PC-9 (cell line): ENCODE measurements at regions of chr10 and their contacts with region 1.

Region 1: GRCh38 chr10:14529351-14529750 is 198.6 kb upstream of the FRMD4A start:
- DNase-seq: no peak
- H3K4me3 ChIP-seq: no peak overlapping the region
- H3K27ac ChIP-seq: no peak overlapping the region
- H3K4me1 ChIP-seq: peaks cover 8% of the 10 kb centered on the region; the same call in 1 of the 2 replicates
- H3K27me3 ChIP-seq: no peaks in the 10 kb centered on the region
- CTCF ChIP-seq: no peak

Region 2: DNA sequence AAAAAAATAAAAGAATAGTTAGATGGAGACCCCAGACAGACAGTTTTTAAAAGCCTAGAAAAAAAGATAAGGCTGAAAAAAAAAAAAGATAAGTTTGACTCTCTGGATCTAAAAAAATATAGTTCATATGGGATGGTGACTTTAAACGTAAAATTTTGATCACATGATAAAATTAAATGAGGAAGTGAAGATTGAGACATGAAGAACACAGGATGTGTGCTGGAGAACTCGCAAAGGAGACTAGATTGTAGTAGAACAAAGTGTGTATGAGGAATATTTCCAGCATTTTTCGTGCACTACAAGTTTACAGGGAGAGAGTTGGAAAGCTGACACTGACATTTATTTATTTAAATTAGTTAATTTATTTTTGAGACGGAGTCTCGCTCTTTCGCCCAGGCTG is 656.2 kb before region 1 on chr10:
- CTCF ChIA-PET with region 1: no interaction called
- POLR2A ChIA-PET with region 1: no interaction called
- intact Hi-C with region 1: no loop called
- DNase-seq: no peak
- H3K4me3 ChIP-seq: no peak overlapping the region
- H3K27ac ChIP-seq: no peak overlapping the region
- H3K4me1 ChIP-seq: no peaks in the 10 kb centered on the region
- H3K27me3 ChIP-seq: no peaks in the 10 kb centered on the region
- CTCF ChIP-seq: no peak

Region 3: DNA sequence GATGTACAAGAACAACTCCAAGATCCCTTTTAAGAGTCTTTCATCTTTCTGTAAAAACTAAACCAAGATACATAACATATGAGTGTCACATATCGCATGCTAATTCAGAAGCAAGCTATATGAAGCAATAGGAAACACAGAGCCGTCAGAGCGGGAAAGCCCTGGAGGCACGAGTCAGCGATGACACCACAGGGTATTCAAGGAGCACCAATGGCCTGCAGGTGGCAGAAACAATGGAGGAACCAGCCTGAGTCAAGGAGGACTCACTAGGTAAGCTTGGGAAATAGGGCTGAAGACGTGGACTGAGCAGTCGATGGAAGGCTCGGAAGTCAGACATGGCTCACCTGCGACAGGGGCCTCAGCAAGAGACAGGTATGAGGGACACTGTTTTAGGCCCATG is 30.9 kb after region 1 on chr10:
- CTCF ChIA-PET with region 1: no interaction called
- POLR2A ChIA-PET with region 1: no interaction called
- intact Hi-C with region 1: no loop called
- DNase-seq: peak; percentile 84 to 91
- H3K4me3 ChIP-seq: no peak overlapping the region
- H3K27ac ChIP-seq: peak overlapping the region; percentile 71
- H3K4me1 ChIP-seq: peaks cover 76% of the 10 kb centered on the region
- H3K27me3 ChIP-seq: no peaks in the 10 kb centered on the region
- CTCF ChIP-seq: peak; percentile 42; the same call in 1 of the 2 replicates

Region 4: GRCh38 chr10:14844948-14845347 is 315.6 kb after region 1 on chr10:
- CTCF ChIA-PET with region 1: interaction called, 3 read pairs
- POLR2A ChIA-PET with region 1: interaction called, 24 read pairs
- intact Hi-C with region 1: no loop called
- DNase-seq: no peak
- H3K4me3 ChIP-seq: no peak overlapping the region
- H3K27ac ChIP-seq: no peak overlapping the region
- H3K4me1 ChIP-seq: no peaks in the 10 kb centered on the region
- H3K27me3 ChIP-seq: no peaks in the 10 kb centered on the region
- CTCF ChIP-seq: no peak